Endothelial cell of umbilical vein (primary cell): ENCODE measurements at regions of chr7 and their contacts with region 1.

Region 1: GRCh38 chr7:123705211-123705901 is 43.4 kb downstream of the WASL start:
- DNase-seq: no peak
- H3K4me3 ChIP-seq: no peak overlapping the region
- H3K27ac ChIP-seq: no peak overlapping the region
- H3K4me1 ChIP-seq: no peaks in the 10 kb centered on the region
- H3K27me3 ChIP-seq: no peaks in the 10 kb centered on the region
- CTCF ChIP-seq: no peak
- POLR2A ChIP-seq: no peak

Region 2: DNA sequence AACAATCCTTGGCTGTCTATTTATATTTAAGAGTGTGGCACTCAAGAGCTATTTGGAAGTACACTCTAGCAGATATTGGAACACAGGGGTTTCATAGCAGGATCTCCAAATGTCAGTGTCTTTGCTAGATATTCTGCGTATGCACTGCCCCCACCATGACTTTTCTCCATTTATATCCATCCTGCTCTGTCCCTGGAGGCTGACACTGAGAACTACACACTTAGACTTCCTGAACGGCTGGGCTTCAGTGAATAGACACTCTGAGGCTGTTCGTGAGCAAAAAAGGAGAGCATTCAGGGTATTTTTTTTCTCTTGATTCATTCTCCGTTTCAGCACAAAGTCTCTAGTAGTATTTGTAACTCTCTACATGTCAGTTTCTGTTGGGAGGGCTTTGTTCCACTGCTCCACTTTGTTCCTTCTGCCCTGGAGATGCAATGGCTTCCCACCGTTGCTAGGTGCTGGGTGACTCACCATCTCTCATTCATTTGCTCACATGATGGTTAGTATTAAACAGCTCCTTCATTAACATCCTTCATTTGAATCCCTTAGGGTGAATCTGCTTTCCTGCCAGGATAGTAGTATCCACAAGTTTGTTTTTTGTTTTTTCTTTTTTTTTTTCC is 349.7 kb before region 1 on chr7:
- CTCF ChIA-PET with region 1: no interaction called
- POLR2A ChIA-PET with region 1: no interaction called
- dilution Hi-C with region 1: no loop called
- intact Hi-C with region 1: no loop called
- DNase-seq: no peak
- H3K4me3 ChIP-seq: no peak overlapping the region
- H3K27ac ChIP-seq: no peak overlapping the region
- H3K4me1 ChIP-seq: no peaks in the 10 kb centered on the region
- H3K27me3 ChIP-seq: no peaks in the 10 kb centered on the region
- CTCF ChIP-seq: no peak
- POLR2A ChIP-seq: no peak

Region 3: GRCh38 chr7:123417580-123417979 is 287.8 kb before region 1 on chr7:
- CTCF ChIA-PET with region 1: no interaction called
- POLR2A ChIA-PET with region 1: no interaction called
- dilution Hi-C with region 1: no loop called
- intact Hi-C with region 1: no loop called
- DNase-seq: no peak
- H3K4me3 ChIP-seq: no peak overlapping the region
- H3K27ac ChIP-seq: no peak overlapping the region
- H3K4me1 ChIP-seq: no peaks in the 10 kb centered on the region
- H3K27me3 ChIP-seq: no peaks in the 10 kb centered on the region
- CTCF ChIP-seq: no peak
- POLR2A ChIP-seq: no peak

Region 4: DNA sequence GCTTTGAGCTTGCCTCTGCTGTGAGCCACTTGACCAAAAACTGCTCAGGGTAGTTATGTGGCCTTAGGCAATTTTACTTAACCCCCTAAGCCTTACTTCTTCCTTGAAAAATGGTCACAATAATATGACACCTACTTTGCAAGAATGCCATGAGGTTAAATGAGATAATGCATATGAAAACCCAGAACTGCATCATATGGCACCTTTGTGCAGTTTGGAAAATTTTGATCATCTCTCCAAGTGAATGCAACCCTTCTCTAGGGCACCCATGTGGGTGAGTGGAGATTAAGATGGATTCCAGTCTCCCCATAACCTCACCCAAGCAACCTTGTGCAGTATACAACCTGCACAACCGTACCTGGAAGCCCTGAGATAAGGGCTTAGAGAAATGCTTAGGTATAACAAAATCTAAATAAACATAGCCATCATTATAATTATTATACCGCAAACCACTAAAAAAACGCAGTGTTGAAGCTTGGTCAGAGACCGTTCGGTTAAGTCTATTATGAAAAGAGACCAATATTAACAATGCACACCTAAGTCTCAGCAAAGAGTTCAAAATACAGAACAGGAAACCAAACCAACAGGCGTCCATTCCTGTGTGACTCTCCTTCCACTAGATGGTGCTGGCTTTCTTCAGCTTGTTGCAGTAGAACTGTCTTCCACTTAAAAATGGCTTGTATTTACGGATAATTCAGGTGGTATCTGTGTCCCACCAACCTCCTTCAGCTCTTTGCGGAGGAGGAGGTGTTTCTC is 124.8 kb before region 1 on chr7:
- CTCF ChIA-PET with region 1: interaction called, 33 read pairs
- POLR2A ChIA-PET with region 1: no interaction called
- dilution Hi-C with region 1: no loop called
- intact Hi-C with region 1: loop called (anchors 1 kb)
- DNase-seq: peak; percentile 61
- H3K4me3 ChIP-seq: no peak overlapping the region
- H3K27ac ChIP-seq: no peak overlapping the region
- H3K4me1 ChIP-seq: no peaks in the 10 kb centered on the region
- H3K27me3 ChIP-seq: no peaks in the 10 kb centered on the region
- CTCF ChIP-seq: peak; percentile 69 to 73
- POLR2A ChIP-seq: no peak

Region 5: DNA sequence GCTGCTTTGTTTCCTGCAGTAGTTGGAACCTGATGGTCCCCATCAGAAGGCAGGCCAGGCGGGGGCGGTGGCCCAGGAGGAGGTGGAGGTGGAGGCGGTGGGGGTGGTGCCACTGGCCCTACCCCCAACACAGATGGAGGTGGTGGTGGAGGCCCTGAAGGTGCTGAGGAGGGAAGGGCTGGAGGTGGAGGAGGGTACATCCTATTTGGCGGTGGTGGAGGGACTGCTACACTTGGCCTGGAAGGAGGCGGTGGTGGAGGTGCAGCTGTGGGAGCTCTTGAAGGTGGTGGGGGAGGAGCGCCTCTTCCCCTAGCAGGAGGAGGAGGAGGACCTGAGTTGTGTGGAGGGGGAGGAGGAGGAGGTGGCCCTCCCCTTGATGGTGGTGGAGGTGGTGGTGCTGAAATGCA is 12.9 kb before region 1 on chr7:
- CTCF ChIA-PET with region 1: interaction called, 14 read pairs
- POLR2A ChIA-PET with region 1: no interaction called
- dilution Hi-C with region 1: no loop called
- intact Hi-C with region 1: no loop called
- DNase-seq: no peak
- H3K4me3 ChIP-seq: no peak overlapping the region
- H3K27ac ChIP-seq: no peak overlapping the region
- H3K4me1 ChIP-seq: no peaks in the 10 kb centered on the region
- H3K27me3 ChIP-seq: no peaks in the 10 kb centered on the region
- CTCF ChIP-seq: no peak
- POLR2A ChIP-seq: no peak

Region 6: DNA sequence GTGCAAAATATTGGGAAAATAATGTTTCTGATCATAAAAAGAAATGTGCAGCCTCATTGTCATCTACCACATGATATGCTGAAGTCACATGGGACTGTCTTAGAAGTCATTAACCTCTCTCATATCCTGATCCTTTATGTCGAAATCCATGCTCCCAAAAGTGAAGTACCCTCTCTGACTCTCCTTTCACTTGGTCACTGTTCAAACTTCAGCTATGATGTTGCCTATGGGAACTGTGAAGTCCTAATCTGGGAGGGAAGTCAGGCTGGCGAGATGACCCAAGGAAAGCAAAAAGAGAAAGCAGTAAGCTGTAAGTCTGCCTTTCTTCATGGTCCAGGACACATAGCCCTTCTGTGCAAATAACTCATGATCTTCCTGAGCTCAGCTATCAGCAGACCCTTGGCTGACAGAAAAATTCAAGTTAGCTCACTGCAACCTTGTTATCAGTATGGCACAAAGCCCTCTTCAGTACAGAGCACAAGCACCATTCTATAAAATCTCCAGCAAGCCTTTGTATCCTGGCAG is 13.9 kb after region 1 on chr7:
- CTCF ChIA-PET with region 1: interaction called, 12 read pairs
- POLR2A ChIA-PET with region 1: no interaction called
- dilution Hi-C with region 1: no loop called
- intact Hi-C with region 1: loop called (anchors 2 kb)
- DNase-seq: no peak
- H3K4me3 ChIP-seq: no peak overlapping the region
- H3K27ac ChIP-seq: no peak overlapping the region
- H3K4me1 ChIP-seq: peaks cover 15% of the 10 kb centered on the region
- H3K27me3 ChIP-seq: no peaks in the 10 kb centered on the region
- CTCF ChIP-seq: no peak
- POLR2A ChIP-seq: no peak

Region 7: GRCh38 chr7:123865517-123866117 is 160.3 kb after region 1 on chr7:
- CTCF ChIA-PET with region 1: interaction called, 7 read pairs
- POLR2A ChIA-PET with region 1: no interaction called
- dilution Hi-C with region 1: no loop called
- intact Hi-C with region 1: loop called (anchors 1 kb)
- DNase-seq: peak; percentile 84
- H3K4me3 ChIP-seq: no peak overlapping the region
- H3K27ac ChIP-seq: peak overlapping the region; percentile 34
- H3K4me1 ChIP-seq: peaks cover 9% of the 10 kb centered on the region
- H3K27me3 ChIP-seq: no peaks in the 10 kb centered on the region
- CTCF ChIP-seq: peak; percentile 41 to 56
- POLR2A ChIP-seq: no peak